ENCODE measurements at regions of chr1 and their contacts with region 1.

Region 1: DNA sequence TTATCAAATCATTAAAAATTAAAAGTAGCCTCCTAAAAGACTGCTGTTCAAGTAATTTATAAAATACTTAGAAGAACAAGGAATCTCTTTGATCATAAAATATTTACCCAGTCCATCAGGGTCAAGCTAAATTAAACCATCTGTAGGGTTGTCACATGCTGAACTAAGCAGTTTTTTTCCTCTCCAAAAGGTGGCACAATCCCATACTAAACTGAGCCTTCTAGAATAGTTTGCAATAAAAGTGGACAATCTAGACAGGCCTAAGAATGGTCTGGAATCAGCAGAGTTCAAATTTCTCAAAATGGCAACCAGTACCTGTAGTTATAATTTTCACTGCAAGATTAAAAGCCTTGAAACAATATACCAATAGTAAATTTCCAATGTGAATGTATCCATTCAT is 194.8 kb downstream of the EIF4G3 start:
- DNase-seq: peak in 2 of 4 experiments; percentile 19 to 34
- ATAC-seq: peak; percentile 82
- H3K4me3 ChIP-seq: no peak overlapping the region
- H3K27ac ChIP-seq: no peak overlapping the region
- H3K4me1 ChIP-seq: no peaks in the 10 kb centered on the region
- H3K27me3 ChIP-seq: no peaks in the 10 kb centered on the region
- CTCF ChIP-seq: peak; percentile 39 to 67 (median 50); a peak in 5 of 6 replicates
- EP300 ChIP-seq: no peak
- POLR2A ChIP-seq: no peak
- RAD21 ChIP-seq: peak; percentile 65 to 79

Region 2: DNA sequence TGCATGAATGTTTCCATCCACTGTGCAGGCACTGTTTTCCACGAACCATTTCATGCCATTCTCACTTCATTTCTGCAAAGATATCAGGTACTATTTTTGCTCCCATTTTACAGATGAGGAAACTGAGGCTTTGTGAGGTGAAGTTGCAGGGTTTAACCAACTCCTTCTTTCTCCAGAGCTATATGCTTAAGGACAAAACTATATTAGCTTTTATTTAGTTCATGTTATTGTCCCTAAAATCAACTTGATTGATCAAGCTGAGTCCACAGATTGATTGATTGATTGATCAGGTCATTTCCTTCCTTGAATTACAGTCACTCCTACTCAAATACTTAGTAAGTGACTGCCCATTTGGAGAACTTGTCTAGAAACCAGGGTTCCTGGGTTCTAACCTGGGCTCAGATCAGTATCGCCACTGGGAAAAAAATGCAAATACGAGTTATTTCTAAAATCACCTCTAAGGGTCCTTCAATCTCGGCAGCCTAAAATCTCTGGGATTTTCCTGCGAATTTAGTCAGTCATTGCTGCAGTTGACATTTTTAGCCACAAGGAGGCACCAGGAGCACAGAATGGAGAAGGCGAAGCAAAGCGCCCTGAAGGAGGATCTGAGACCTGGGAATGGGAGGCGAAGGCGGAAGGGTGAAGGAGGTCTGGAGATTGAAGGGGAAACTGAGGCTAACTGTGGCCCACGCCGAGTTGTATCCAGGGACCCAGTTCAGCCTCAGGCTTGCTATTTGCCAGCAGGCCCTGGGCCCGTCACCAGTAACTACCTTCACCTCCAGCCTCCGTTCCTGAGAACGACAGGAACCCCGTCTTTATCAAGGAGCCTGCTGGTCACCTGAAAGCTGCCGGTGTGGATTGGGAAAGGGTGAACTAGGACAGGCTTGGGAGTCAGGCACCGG is 459.7 kb before region 1 on chr1:
- CTCF ChIA-PET with region 1: no interaction called
- POLR2A ChIA-PET with region 1: no interaction called
- in situ Hi-C with region 1: no loop called
- intact Hi-C with region 1: loop called (anchors 10 kb)
- DNase-seq: peak; percentile 69 to 85 (median 82)
- ATAC-seq: peak; percentile 92
- H3K4me3 ChIP-seq: no peak overlapping the region
- H3K27ac ChIP-seq: no peak overlapping the region
- H3K4me1 ChIP-seq: no peaks in the 10 kb centered on the region; a peak in 2 of 5 replicates
- H3K27me3 ChIP-seq: peaks cover 22 to 37% of the 10 kb centered on the region in 2 experiments
- CTCF ChIP-seq: peak; percentile 95 to 98 (median 95)
- EP300 ChIP-seq: no peak
- POLR2A ChIP-seq: no peak
- RAD21 ChIP-seq: peak; percentile 88 to 96

Region 3: DNA sequence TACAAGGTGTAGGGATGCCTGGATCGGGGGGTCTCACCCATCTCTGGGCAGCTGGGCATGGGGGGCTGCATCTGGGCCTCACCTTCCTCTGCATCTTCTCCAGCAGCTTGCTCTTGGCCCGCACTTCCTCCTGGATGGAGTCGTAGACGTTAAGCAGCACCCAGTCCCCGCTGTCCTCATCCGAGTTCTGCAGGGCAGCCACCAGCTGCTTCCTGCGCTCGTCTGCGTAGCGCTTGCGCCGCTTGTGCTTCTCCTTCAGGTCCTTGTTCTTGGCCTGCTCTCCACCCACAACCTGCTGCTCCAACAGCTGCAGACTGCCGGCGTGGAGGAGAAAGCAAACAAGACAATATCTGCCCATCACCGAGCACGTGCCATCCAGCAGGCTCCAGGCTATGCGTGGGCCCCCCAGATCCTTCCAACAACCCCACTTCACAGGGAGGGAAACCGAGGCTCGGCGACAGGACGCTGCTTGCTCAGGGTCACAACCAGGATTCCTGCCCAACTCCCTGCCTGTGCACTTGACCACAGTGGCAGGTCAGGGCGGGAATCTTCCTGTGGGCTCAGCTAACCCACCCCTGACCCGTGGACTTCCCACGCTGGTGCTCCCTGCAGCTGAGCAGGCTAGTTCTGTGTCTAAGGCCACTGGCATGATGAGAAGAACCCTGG is 299.2 kb before region 1 on chr1:
- CTCF ChIA-PET with region 1: no interaction called
- POLR2A ChIA-PET with region 1: no interaction called
- in situ Hi-C with region 1: no loop called
- intact Hi-C with region 1: no loop called
- DNase-seq: no peak
- ATAC-seq: peak; percentile 33; the same call in 1 of the 3 replicates
- H3K4me3 ChIP-seq: no peak overlapping the region
- H3K27ac ChIP-seq: no peak overlapping the region
- H3K4me1 ChIP-seq: peaks cover 0 to 27% of the 10 kb centered on the region in 2 experiments; a peak in 2 of 5 replicates
- H3K27me3 ChIP-seq: peaks cover 61 to 77% of the 10 kb centered on the region in 2 experiments
- CTCF ChIP-seq: no peak
- EP300 ChIP-seq: no peak
- POLR2A ChIP-seq: no peak
- RAD21 ChIP-seq: no peak

Region 4: DNA sequence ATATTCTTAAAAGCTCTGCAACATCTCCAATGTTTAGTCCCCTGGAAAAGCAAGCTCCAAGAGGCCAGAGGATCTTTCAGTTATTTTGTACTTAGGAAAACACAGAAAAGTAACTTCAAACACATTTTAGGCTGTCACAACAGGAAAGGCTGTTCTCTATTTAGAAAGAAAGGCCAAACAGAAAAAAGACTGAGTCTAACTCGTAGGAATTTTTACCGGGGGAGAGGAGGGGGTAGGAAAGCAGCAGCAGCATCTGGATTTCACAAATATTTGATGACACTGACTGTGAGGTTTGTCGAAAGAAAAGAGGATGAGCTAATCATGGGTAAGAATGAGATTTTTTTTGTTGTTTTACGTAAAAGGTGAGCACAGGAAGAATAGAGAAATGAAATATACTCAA is 87.6 kb after region 1 on chr1:
- CTCF ChIA-PET with region 1: no interaction called
- POLR2A ChIA-PET with region 1: no interaction called
- in situ Hi-C with region 1: no loop called
- intact Hi-C with region 1: loop called (anchors 5 kb)
- DNase-seq: no peak
- ATAC-seq: no peak
- H3K4me3 ChIP-seq: no peak overlapping the region
- H3K27ac ChIP-seq: no peak overlapping the region
- H3K4me1 ChIP-seq: peaks cover 0 to 3% of the 10 kb centered on the region in 2 experiments; a peak in 1 of 5 replicates
- H3K27me3 ChIP-seq: no peaks in the 10 kb centered on the region
- CTCF ChIP-seq: no peak
- EP300 ChIP-seq: no peak
- POLR2A ChIP-seq: no peak
- RAD21 ChIP-seq: no peak

Region 5: DNA sequence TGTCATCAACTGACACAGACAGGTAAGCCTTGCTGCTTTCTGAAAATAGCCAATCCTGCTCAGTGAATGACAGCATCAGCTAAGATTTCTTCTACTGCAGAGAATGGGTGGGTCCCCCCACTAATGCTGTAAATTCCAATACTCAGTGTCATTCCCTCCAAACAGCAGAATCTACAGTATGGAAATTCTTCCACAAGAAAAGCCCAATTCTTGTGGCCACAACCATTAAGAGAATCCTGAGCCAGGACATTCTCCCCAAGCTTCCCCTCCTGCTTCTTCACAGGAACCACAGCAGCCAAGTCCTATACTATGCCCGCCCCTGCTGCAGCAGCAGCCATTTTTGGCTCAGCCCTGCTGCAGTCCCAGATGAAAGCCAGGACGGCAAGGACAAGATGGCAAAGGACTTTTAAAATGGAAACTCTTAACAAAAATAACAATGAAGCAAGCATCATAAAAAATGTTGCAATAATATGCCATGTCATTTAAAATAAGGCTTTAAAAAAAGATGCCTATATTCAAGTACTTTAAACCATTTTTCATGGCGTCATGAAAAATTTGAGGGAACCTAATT is 168.0 kb after region 1 on chr1:
- CTCF ChIA-PET with region 1: no interaction called
- POLR2A ChIA-PET with region 1: no interaction called
- in situ Hi-C with region 1: no loop called
- intact Hi-C with region 1: no loop called
- DNase-seq: no peak
- ATAC-seq: peak; percentile 42; the same call in 1 of the 3 replicates
- H3K4me3 ChIP-seq: no peak overlapping the region
- H3K27ac ChIP-seq: no peak overlapping the region
- H3K4me1 ChIP-seq: no peaks in the 10 kb centered on the region; a peak in 1 of 5 replicates
- H3K27me3 ChIP-seq: no peaks in the 10 kb centered on the region
- CTCF ChIP-seq: no peak
- EP300 ChIP-seq: no peak
- POLR2A ChIP-seq: no peak
- RAD21 ChIP-seq: no peak

Region 6: DNA sequence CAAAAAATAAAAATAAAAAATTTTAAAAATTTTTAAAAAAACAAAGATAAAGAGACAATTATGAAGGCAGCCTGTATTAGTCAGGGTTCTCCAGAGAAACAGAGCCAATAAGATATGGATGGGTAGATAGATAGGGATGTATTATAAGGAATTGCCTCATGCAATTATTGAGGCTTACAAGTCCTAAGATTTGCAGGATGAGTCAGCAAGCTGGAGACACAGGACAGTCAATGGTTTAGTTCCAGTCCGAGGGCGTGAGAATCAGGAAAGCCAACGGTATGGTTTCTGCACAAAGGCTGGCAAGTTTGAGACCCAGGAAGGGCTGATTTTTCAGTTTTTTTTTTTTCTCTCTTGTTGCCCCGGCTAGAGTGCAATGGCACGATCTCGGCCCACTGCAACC is 218.9 kb after region 1 on chr1:
- CTCF ChIA-PET with region 1: interaction called, 28 read pairs
- POLR2A ChIA-PET with region 1: interaction called, 4 read pairs
- in situ Hi-C with region 1: no loop called
- intact Hi-C with region 1: loop called (anchors 1 kb)
- DNase-seq: peak in 1 of 4 experiments; percentile 46
- ATAC-seq: peak; percentile 71
- H3K4me3 ChIP-seq: no peak overlapping the region
- H3K27ac ChIP-seq: no peak overlapping the region
- H3K4me1 ChIP-seq: no peaks in the 10 kb centered on the region; a peak in 1 of 5 replicates
- H3K27me3 ChIP-seq: peaks cover 4 to 12% of the 10 kb centered on the region in 2 experiments; a peak in 3 of 5 replicates
- CTCF ChIP-seq: no peak
- EP300 ChIP-seq: no peak
- POLR2A ChIP-seq: no peak
- RAD21 ChIP-seq: no peak

Measured in K562 (cell line).